Vagina (tissue), 2 donors: ENCODE measurements at regions of chr4 and their contacts with region 1.

Region 1: GRCh38 chr4:153573881-153574802 is 108.0 kb downstream of the TMEM131L start:
- DNase-seq: no peak
- H3K4me3 ChIP-seq: no peak overlapping the region
- H3K27ac ChIP-seq: no peak overlapping the region
- H3K4me1 ChIP-seq: peaks cover 6% of the 10 kb centered on the region
- H3K27me3 ChIP-seq: no peaks in the 10 kb centered on the region
- CTCF ChIP-seq: peak; percentile 27 to 56 (median 49)
- POLR2A ChIP-seq: no peak

Region 2: GRCh38 chr4:153142700-153143438 is 431.3 kb before region 1 on chr4:
- intact Hi-C with region 1: loop called (anchors 5 kb)
- DNase-seq: no peak
- H3K4me3 ChIP-seq: no peak overlapping the region
- H3K27ac ChIP-seq: no peak overlapping the region
- H3K4me1 ChIP-seq: peaks cover 7% of the 10 kb centered on the region
- H3K27me3 ChIP-seq: no peaks in the 10 kb centered on the region
- CTCF ChIP-seq: peak; percentile 49 to 81 (median 78)
- POLR2A ChIP-seq: no peak

Region 3: DNA sequence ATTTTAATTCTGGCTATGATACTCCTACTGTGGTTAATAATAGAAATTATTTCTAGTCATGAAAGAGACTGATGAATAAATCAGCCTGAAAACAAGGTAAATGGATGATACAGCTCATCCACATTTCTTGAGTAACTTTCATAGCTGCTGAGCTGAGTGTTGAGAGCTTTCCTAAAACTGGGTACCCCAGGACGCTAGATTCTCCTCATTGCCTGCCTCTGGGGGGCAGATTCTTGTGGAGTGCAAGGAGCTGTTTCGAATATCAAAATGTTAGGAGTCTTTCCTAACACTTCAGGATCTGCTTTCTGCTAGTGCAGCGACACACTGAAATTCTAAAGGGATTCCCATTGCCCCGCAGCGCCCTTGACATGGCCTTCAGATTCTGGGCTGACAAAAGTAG is 227.6 kb before region 1 on chr4:
- intact Hi-C with region 1: loop called (anchors 2 kb)
- DNase-seq: no peak
- H3K4me3 ChIP-seq: no peak overlapping the region
- H3K27ac ChIP-seq: no peak overlapping the region
- H3K4me1 ChIP-seq: no peaks in the 10 kb centered on the region
- H3K27me3 ChIP-seq: no peaks in the 10 kb centered on the region
- CTCF ChIP-seq: no peak
- POLR2A ChIP-seq: no peak

Region 4: GRCh38 chr4:153466081-153466948 is 107.8 kb before region 1 on chr4 and contains the start of gene TMEM131L:
- intact Hi-C with region 1: loop called (anchors 5 kb)
- DNase-seq: no peak
- H3K4me3 ChIP-seq: peak within 1 kb of the TSS; percentile 86 to 92
- H3K27ac ChIP-seq: peak within 1 kb of the TSS; percentile 81
- H3K4me1 ChIP-seq: peaks cover 50% of the 10 kb centered on the region
- H3K27me3 ChIP-seq: no peaks in the 10 kb centered on the region
- CTCF ChIP-seq: no peak
- POLR2A ChIP-seq: peak in 1 of 2 donors; percentile 42
- total RNA-seq, gene TMEM131L: 17.7 TPM